GM10248 (cell line): ENCODE measurements at regions of chr3 and their contacts with region 1.

Region 1: DNA sequence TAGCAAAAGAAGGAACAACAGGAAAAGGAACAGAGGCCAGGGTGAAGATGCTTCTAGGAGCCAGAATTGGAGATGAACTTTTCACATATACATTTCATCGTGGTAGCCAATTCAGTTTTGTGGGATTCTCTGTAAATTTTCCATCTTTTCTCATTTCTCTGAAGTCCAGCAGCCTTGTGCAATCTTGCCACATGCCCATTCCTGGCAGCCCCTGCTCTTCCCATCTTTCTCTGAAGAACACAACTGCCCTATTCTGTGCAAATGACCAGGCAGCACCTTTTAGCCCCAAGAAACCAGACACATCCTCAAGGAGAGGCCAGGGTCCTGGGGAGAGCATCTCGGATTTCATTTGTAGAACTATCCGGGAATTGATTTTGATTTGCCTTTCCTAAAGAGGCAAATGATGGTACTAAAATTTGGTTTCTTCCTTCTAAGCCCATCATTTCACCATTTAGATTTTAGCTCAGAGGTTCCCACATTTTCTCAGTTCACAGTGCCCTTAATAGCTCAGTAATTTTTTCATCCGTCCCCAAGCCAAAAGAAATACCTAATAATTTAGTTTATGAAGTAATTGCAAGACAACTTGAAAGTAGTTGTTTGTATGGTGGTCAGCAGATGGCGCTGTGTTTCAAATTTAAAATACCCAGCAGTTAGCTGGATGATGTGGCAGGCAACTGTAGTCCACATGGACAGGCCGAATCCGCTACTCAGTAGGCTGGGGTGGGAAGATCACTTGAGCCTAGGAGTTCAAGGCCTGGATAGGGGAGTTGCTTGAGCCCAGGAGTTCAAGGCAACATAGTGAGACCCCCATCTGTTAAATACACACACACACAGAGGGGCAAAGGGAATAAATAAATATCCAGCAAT is 61.3 kb upstream of the ACKR4 start:
- DNase-seq: peak; percentile 54
- CTCF ChIP-seq: peak; percentile 64

Region 2: GRCh38 chr3:132549890-132550578 is 14.2 kb after region 1 on chr3:
- CTCF ChIA-PET with region 1: interaction called, 102 read pairs
- POLR2A ChIA-PET with region 1: no interaction called
- DNase-seq: peak; percentile 33
- CTCF ChIP-seq: no peak

Region 3: DNA sequence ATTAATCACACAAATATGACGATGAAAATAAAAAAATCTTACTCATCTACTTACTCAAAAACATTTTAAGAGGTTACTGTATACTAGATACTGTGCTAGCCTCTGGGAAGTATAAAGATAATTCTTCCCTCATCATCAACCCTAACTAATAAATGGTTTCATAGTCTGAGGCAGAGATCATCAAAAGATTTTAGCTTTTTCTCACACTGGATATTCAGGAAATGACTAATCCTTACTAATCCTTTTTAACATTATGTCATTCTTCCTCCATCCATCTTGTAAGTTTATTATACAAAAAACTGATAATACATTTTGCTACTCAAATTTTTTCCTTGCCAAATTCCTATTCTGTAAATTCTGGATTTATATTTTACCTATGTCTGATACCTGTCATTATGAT is 94.1 kb after region 1 on chr3:
- CTCF ChIA-PET with region 1: interaction called, 13 read pairs
- POLR2A ChIA-PET with region 1: no interaction called
- DNase-seq: no peak
- CTCF ChIP-seq: no peak

Region 4: DNA sequence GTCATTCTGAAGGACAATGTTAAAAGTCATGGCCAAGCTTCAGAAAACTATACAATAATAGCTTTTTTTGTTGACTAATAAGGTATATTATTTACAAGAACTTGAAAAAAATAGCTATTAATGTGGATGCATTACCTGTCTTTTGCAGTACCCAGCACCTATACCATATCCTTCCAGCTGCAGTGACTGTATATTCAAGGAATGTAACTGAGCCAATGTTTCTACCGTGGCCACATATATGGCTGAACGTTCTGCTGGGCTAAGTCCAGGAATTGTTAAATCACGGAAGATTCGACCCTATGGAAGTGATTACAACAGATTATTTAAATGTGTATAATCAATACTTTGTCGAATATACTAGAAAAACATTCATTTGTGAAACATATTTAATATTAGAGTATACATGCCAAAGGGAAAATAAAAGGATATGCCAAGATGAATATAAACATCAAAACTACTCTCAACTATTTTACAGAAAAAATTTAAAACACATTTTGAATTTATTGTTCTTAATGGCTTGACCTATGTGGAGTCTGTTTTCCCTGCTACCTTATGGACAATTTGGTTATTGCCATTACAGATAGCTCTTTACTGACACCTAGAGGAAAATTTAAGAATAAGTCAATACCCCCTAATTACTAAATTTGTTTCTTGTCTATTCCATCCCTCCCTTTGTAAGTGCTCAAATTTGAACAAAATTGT is 106.2 kb after region 1 on chr3:
- CTCF ChIA-PET with region 1: interaction called, 190 read pairs
- POLR2A ChIA-PET with region 1: no interaction called
- DNase-seq: peak; percentile 56
- CTCF ChIP-seq: peak; percentile 38